BJ (cell line): ENCODE measurements at regions of chr17 and their contacts with region 1.

Region 1: DNA sequence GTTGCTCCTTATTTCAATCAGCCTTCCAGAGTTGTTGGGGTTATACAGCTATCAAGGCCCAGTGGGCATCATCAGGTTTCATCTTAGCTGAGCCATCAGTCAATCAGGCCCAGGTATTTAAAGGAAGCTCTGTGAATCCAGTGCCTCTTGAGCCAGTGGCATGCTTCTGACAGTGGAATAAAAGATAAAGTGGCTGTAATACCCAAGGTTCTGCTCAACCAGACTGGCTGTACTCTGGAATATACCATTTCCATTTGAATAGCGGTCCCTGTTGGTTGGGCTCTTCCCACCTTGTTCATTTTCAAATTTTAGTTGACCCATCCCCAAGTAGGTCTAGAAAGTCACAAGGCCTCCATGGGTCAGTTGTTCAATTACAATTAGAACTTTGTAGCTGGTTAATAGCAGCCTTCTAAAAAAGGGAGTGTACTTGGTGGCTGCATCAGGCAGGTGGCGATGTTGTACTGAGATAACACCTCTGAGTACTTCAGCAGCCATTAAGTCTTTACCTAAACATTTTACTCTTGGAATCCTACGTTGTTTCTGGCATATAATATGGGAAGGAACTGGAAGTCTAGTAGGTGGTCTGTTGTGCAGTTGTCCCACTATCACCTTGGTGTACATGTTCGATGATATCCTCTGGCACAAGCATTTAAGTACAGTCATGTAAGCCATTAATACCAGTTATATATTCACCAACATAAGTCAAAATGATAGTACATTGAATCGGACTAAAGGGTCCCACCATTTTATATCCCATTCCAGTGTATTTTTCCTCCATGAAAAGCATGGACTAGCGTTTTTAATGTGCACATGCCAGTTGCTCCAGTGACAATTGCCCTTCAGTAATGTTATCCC is 294.1 kb downstream of the BCAS3 start:
- DNase-seq: no peak
- H3K4me3 ChIP-seq: no peak overlapping the region
- H3K27me3 ChIP-seq: no peaks in the 10 kb centered on the region
- CTCF ChIP-seq: peak; percentile 71

Region 2: GRCh38 chr17:60720763-60721531 is 250.8 kb before region 1 on chr17:
- CTCF ChIA-PET with region 1: interaction called, 15 read pairs
- POLR2A ChIA-PET with region 1: no interaction called
- DNase-seq: no peak
- H3K4me3 ChIP-seq: no peak overlapping the region
- H3K27me3 ChIP-seq: no peaks in the 10 kb centered on the region
- CTCF ChIP-seq: peak; percentile 87

Region 3: DNA sequence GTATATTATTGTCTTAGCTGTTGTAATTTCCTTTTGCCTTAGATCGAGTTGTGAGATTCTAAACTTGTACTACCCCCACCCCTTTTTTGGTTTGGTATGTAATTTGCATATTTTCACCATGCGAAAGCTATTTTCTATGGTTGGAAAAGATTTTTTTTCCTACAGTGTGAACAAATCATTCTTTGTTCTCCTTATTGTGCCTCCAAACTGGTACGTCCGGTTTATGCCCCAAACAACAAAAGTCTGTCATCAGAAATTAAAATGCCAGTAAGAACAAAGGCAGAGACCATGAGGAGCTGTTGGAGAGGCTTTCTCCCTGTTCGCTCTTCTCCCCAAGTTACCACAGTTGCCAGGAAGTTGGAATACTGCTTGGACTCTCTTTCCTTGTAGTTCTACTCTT is 227.9 kb before region 1 on chr17:
- CTCF ChIA-PET with region 1: no interaction called
- POLR2A ChIA-PET with region 1: no interaction called
- DNase-seq: peak; percentile 15
- H3K4me3 ChIP-seq: peak overlapping the region; percentile 28
- H3K27me3 ChIP-seq: no peaks in the 10 kb centered on the region
- CTCF ChIP-seq: no peak

Region 4: DNA sequence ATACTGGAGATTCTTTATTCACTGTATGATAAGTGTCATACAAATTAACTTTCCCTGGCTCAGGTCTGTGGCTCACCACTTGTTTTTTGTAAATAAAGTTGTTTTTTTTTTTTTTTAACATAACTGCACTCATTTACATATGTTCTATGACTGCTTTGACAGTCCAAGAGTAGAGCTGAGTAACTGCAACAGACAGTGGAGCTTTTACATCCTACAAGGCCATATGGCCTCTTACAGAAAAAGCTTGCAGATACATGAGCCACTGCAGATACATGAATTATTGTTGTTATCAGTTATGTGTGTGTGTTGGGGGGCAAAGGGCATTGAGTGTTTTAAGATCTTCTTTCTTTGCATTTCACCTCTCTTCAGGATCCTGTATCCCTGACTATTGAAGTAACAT is 17.6 kb after region 1 on chr17:
- CTCF ChIA-PET with region 1: interaction called, 11 read pairs
- POLR2A ChIA-PET with region 1: no interaction called
- DNase-seq: no peak
- H3K4me3 ChIP-seq: no peak overlapping the region
- H3K27me3 ChIP-seq: no peaks in the 10 kb centered on the region
- CTCF ChIP-seq: no peak

Region 5: GRCh38 chr17:61057257-61057656 is 85.5 kb after region 1 on chr17:
- CTCF ChIA-PET with region 1: no interaction called
- POLR2A ChIA-PET with region 1: no interaction called
- DNase-seq: no peak
- H3K4me3 ChIP-seq: no peak overlapping the region
- H3K27me3 ChIP-seq: no peaks in the 10 kb centered on the region
- CTCF ChIP-seq: no peak

Region 6: DNA sequence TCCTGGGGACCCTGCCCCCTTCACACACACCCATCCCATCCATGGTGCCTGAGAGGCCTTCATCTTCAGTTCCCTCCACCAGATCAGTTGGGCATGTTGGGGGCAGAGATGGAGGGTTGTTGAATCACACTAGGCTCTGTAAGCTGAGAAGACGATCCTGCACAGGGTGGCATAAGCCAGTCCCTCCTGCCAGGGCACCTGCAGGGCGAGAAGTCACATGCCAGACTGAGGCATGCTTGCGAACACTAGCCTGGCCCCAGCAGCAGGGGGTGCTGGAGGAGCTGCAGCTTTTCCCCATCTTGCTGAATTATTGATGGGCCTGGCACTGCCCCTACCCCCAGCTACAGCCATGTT is 421.8 kb after region 1 on chr17:
- CTCF ChIA-PET with region 1: interaction called, 13 read pairs
- POLR2A ChIA-PET with region 1: no interaction called
- DNase-seq: no peak
- H3K4me3 ChIP-seq: no peak overlapping the region
- H3K27me3 ChIP-seq: no peaks in the 10 kb centered on the region
- CTCF ChIP-seq: peak; percentile 28; the same call in 1 of the 2 replicates